ENCODE measurements at regions of chr1 and their contacts with region 1.

Region 1: DNA sequence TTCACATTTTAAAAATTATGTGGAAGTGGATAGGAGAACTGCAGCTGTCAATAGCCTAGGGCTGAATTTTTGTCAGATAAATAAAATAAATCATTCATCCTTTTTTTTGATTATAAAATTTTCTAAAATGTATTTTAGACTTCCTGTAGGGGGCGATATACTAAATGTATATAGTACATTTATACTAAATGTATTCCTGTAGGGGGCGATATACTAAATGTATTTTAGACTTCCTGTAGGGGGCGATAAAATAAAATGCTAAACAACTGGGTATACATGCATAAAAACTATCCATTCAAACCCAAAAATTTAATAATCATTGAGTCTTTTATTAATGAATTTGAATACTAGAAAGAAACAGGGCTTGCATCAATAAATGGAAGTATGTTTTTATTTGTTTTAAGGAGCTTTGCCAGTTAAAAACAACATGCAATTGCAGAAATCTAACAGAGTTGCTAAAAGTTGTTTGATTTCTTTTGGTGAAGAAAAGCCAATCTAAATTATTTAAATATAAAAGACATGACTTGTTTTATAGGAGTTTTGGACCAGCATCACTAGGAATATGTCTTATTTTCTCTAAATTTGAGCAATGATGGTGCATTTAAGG is 31.4 kb downstream of the CLCA1 start:
- DNase-seq: no peak
- H3K4me3 Mint-ChIP-seq: no peak overlapping the region
- H3K27ac Mint-ChIP-seq: no peak overlapping the region
- H3K4me1 Mint-ChIP-seq: peaks cover 7% of the 10 kb centered on the region
- H3K27me3 Mint-ChIP-seq: peaks cover 8% of the 10 kb centered on the region

Region 2: GRCh38 chr1:85654066-85654782 is 845.9 kb before region 1 on chr1:
- CTCF ChIA-PET with region 1: no interaction called
- intact Hi-C with region 1: no loop called
- DNase-seq: no peak
- H3K4me3 Mint-ChIP-seq: no peak overlapping the region
- H3K27ac Mint-ChIP-seq: no peak overlapping the region
- H3K4me1 Mint-ChIP-seq: no peaks in the 10 kb centered on the region
- H3K27me3 Mint-ChIP-seq: no peaks in the 10 kb centered on the region

Region 3: DNA sequence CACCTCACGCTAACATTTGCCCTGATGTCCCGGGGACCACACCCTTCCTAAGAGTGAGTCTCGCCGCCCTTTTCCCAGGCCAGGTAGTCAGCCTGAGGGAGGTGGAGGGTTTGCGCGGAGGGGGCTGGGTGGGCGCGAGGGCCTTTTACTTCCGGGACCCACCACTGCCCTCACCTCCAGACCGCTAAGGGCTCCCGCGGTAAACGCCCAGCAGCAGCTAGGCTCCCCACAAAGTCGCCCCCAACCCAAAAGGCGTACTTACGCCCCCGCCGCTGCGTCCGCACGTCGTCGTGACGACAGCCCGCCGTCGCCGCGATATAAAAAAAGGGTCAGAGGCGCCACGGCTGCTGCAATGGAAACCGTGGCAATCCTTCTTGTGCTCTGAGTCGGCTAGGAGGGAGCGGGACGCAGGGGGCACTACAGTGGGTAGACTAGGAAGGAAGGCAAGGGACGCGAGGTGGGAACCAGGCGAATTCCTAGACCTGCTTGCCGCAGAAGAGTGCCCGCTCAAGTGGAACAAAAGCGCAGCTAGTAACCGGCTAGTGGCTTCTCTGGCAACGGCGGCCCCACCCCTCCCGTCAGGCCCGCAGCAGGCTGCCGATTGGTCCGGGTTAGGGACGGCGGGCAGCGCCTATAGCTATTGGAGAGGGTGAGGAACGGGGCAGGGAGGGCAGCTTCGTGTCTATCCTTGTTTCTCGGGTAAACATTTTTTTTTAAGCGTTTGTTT is 104.2 kb before region 1 on chr1 and contains the start of gene ODF2L:
- CTCF ChIA-PET with region 1: interaction called, 9 read pairs
- intact Hi-C with region 1: loop called (anchors 5 kb)
- DNase-seq: peak; percentile 94
- H3K4me3 Mint-ChIP-seq: peak within 1 kb of the TSS; percentile 95
- H3K27ac Mint-ChIP-seq: peak within 1 kb of the TSS; percentile 91
- H3K4me1 Mint-ChIP-seq: peaks cover 44% of the 10 kb centered on the region
- H3K27me3 Mint-ChIP-seq: no peaks in the 10 kb centered on the region
- total RNA-seq, gene ODF2L: 17.8 to 18.0 TPM

Region 4: GRCh38 chr1:86429835-86430234 is 70.3 kb before region 1 on chr1:
- CTCF ChIA-PET with region 1: interaction called, 14 read pairs
- intact Hi-C with region 1: no loop called
- DNase-seq: peak; percentile 36
- H3K4me3 Mint-ChIP-seq: no peak overlapping the region
- H3K27ac Mint-ChIP-seq: no peak overlapping the region
- H3K4me1 Mint-ChIP-seq: no peaks in the 10 kb centered on the region
- H3K27me3 Mint-ChIP-seq: no peaks in the 10 kb centered on the region

Region 5: DNA sequence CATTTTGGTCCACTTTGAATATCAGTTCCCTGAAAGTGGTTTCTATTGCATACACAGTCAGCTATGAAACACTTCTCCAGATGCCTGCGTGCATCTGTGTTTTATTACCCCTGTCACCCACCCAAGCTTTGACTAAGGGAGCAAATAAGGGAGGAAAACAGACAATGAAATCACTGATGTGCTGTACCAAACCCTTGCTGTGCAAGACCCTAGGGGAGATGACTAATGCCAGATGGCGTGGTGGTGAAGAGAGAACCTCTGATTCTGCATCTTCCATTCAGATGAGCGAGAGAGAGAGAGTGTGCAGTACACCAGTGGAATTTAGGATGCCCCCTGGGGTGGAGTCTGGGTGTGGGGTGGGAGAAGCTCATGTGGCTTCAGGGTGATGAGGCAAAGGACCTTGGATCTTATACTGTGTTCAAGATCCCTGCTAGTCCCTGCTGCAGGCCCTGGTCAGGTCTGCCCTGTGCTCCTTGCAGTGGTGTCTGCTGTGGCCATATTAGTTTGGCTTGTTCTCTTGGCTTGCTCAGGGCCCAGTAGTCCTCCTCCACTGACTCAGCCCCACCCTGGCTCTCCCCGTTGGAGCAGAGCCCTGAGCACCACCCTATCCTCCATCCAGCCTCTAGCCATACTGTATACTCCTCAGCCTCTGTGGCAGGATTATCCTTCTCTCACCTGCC is 12.8 kb before region 1 on chr1:
- CTCF ChIA-PET with region 1: interaction called, 55 read pairs
- intact Hi-C with region 1: no loop called
- DNase-seq: no peak
- H3K4me3 Mint-ChIP-seq: no peak overlapping the region
- H3K27ac Mint-ChIP-seq: no peak overlapping the region
- H3K4me1 Mint-ChIP-seq: no peaks in the 10 kb centered on the region
- H3K27me3 Mint-ChIP-seq: no peaks in the 10 kb centered on the region

Region 6: GRCh38 chr1:86741947-86742572 is 242.0 kb after region 1 on chr1:
- CTCF ChIA-PET with region 1: interaction called, 3 read pairs
- intact Hi-C with region 1: loop called (anchors 1 kb)
- DNase-seq: peak; percentile 55
- H3K4me3 Mint-ChIP-seq: no peak overlapping the region
- H3K27ac Mint-ChIP-seq: no peak overlapping the region
- H3K4me1 Mint-ChIP-seq: no peaks in the 10 kb centered on the region
- H3K27me3 Mint-ChIP-seq: no peaks in the 10 kb centered on the region

Region 7: GRCh38 chr1:86965012-86965826 is 465.1 kb after region 1 on chr1:
- CTCF ChIA-PET with region 1: no interaction called
- intact Hi-C with region 1: loop called (anchors 10 kb)
- DNase-seq: peak; percentile 44
- H3K4me3 Mint-ChIP-seq: no peak overlapping the region
- H3K27ac Mint-ChIP-seq: no peak overlapping the region
- H3K4me1 Mint-ChIP-seq: no peaks in the 10 kb centered on the region
- H3K27me3 Mint-ChIP-seq: no peaks in the 10 kb centered on the region